ENCODE measurements at regions of chr10 and their contacts with region 1.

Region 1: DNA sequence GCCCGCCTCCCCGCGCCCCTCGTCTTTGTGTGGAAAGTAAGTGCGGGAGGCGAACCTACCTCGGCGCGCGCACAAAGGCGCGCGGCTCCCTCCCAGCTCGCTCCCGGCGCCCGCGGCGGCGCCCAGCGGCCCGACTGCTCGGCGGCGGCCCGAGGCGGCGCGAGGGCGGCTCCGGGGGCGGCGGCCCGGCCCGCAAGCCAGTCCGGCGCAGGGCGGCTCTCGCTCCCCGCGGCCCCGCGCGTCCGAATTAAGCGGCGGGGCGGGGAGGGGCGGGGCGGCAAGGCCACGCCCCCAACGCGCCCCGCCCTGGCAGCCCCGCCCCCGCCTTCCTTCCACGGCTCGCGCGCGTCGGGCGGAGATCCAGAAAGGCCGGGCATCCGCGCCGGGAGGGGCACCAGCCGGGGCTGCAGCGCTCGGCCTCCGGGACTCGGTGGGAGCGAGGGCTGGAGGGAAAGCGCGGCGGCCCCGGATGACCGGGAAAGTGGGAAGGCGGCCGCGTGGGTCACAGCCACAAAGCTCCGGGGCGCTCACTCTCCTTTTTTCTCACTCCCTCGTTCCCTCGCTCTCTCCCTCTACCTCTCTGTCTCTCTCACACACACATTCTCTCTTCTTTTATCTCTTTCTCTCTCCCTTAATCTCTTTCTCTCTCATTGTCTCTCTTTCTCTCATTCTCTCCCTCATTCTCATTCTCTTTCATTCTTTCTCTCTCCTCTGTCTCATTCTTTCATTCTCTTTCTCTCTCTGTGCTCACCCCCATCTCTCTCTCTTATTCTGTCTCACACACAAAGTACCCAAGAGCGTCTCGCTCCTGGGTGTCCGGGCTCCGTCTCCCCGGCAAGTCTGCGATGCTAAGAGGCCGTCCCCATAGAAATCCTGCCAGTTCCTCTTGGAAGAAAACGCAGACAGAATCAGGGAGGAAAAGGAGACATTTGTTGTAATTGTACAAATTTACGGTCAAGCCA is 170.2 kb downstream of the FAM107B start:
- DNase-seq: peak; percentile 66
- H3K4me3 Mint-ChIP-seq: peak overlapping the region; percentile 87
- H3K27ac Mint-ChIP-seq: peak overlapping the region; percentile 94
- H3K4me1 Mint-ChIP-seq: peaks cover 63% of the 10 kb centered on the region
- H3K27me3 Mint-ChIP-seq: no peaks in the 10 kb centered on the region

Region 2: GRCh38 chr10:13271552-13272163 is 1332.8 kb before region 1 on chr10:
- CTCF ChIA-PET with region 1: no interaction called
- intact Hi-C with region 1: no loop called
- DNase-seq: peak; percentile 61
- H3K4me3 Mint-ChIP-seq: no peak overlapping the region
- H3K27ac Mint-ChIP-seq: no peak overlapping the region
- H3K4me1 Mint-ChIP-seq: peaks cover 4% of the 10 kb centered on the region
- H3K27me3 Mint-ChIP-seq: no peaks in the 10 kb centered on the region

Region 3: GRCh38 chr10:14527134-14527844 is 77.2 kb before region 1 on chr10:
- CTCF ChIA-PET with region 1: interaction called, 3 read pairs
- intact Hi-C with region 1: loop called (anchors 1 kb)
- DNase-seq: no peak
- H3K4me3 Mint-ChIP-seq: no peak overlapping the region
- H3K27ac Mint-ChIP-seq: peak overlapping the region; percentile 81
- H3K4me1 Mint-ChIP-seq: peaks cover 78% of the 10 kb centered on the region
- H3K27me3 Mint-ChIP-seq: no peaks in the 10 kb centered on the region

Region 4: GRCh38 chr10:14588084-14588937 is 16.2 kb before region 1 on chr10:
- CTCF ChIA-PET with region 1: interaction called, 4 read pairs
- intact Hi-C with region 1: loop called (anchors 1 kb)
- DNase-seq: peak; percentile 83
- H3K4me3 Mint-ChIP-seq: peak overlapping the region; percentile 63
- H3K27ac Mint-ChIP-seq: peak overlapping the region; percentile 97
- H3K4me1 Mint-ChIP-seq: peaks cover 90% of the 10 kb centered on the region
- H3K27me3 Mint-ChIP-seq: no peaks in the 10 kb centered on the region

Region 5: DNA sequence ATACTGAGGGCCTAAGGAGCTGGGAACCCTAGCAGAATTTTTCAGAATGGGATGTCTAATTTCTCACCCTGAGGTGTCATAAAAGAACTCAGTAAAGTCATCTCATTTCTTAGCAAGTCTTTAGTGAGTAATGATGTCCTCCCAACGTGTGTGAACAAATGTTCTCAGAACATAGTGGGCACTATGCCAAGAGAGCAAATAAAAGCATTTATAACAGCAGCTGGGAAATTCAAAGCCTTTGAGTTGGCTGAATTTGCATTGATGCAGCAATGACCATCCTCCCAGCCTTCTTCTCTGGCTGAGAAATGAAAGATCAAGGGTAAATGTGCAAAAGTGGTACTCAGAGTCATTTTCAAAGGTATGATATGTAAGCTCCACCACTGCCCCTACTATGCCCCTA is 60.8 kb after region 1 on chr10:
- CTCF ChIA-PET with region 1: interaction called, 6 read pairs
- intact Hi-C with region 1: loop called (anchors 1 kb)
- DNase-seq: peak; percentile 65
- H3K4me3 Mint-ChIP-seq: no peak overlapping the region
- H3K27ac Mint-ChIP-seq: peak overlapping the region; percentile 78
- H3K4me1 Mint-ChIP-seq: peaks cover 53% of the 10 kb centered on the region
- H3K27me3 Mint-ChIP-seq: no peaks in the 10 kb centered on the region

Region 6: DNA sequence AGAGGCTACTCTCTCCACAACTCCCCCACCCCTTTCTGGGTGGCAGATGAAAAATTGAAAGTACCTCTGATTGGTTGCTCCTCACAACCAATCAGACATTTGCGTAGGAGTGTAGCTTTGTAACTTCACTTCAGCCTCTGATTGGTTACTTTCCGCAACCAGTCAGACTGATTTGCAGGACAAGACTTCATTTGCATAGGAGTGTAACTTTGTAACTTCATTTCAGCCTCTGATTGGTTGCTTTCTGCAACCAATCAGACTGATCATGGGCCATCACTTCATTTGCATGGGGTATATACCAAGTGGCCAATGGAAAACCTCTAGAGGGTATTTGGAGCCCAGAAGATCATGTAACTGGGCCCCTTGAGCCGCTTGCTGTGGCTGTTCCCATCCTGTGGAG is 207.8 kb after region 1 on chr10:
- CTCF ChIA-PET with region 1: no interaction called
- intact Hi-C with region 1: loop called (anchors 5 kb)
- DNase-seq: no peak
- H3K4me3 Mint-ChIP-seq: no peak overlapping the region
- H3K27ac Mint-ChIP-seq: no peak overlapping the region
- H3K4me1 Mint-ChIP-seq: peaks cover 24% of the 10 kb centered on the region
- H3K27me3 Mint-ChIP-seq: no peaks in the 10 kb centered on the region

Region 7: GRCh38 chr10:15122477-15123030 is 518.1 kb after region 1 on chr10:
- CTCF ChIA-PET with region 1: no interaction called
- intact Hi-C with region 1: loop called (anchors 10 kb)
- DNase-seq: peak; percentile 59
- H3K4me3 Mint-ChIP-seq: no peak overlapping the region
- H3K27ac Mint-ChIP-seq: peak overlapping the region; percentile 86
- H3K4me1 Mint-ChIP-seq: peaks cover 32% of the 10 kb centered on the region
- H3K27me3 Mint-ChIP-seq: no peaks in the 10 kb centered on the region

Measured in activated naive CD4-positive, alpha-beta T cell treated with anti-CD3 and anti-CD28 coated beads for 36 hours (primary cell).